Naive thymus-derived CD4-positive, alpha-beta T cell (primary cell): ENCODE measurements at regions of chr3 and their contacts with region 1.

Region 1: DNA sequence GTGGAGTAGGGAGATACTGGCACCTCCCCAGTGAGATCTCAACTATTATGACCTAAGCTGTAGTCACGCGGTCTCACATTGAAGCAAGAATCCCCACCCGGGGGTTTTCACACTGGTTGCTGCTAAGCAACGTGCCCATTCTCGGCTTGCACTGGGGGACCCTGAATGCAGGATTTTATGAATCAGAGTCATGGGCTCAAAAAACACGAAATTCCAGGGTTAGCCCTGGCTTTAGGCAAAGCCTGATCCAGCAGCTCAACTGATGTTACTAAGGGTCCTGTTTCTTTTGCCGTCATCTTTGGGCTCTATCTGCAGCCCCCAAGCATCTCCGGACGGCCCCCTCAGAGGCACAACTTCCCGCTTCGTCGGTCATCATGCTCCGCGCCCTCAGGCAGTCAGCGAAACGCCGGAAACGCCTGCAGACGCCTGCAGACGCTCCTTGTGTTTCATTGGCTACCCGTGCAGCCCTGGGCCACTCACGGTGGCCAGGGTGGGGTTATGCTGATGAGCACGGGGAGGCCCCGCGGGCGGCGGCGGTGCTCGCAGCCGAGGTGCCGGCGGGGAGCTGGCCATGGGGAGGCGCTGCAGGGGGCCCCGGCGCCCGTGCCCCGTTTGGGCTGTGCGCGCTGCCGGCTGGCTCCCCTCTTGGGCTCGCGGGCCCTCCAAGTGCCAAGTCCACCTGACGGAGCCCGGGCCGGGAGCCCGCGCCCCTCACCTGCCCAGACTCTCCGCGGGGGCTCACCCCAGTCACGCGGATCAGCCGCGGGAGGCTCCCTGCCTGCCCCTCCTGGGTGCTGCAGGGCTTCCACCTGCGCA is 25.8 kb downstream of the EFCC1 start:
- DNase-seq: peak; percentile 84 to 94 (median 93)
- ATAC-seq: peak; percentile 99
- H3K4me3 ChIP-seq: peak overlapping the region; percentile 67
- H3K4me3 Mint-ChIP-seq: peak overlapping the region; percentile 69 to 88 (median 86)
- H3K27ac ChIP-seq: peak overlapping the region; percentile 74
- H3K27ac Mint-ChIP-seq: peak overlapping the region; percentile 82 to 97 (median 93)
- H3K4me1 ChIP-seq: peaks cover 8 to 11% of the 10 kb centered on the region in 2 donors
- H3K4me1 Mint-ChIP-seq: peaks cover 13 to 31% (median 25%) of the 10 kb centered on the region in 7 donors
- H3K27me3 ChIP-seq: no peaks in the 10 kb centered on the region
- H3K27me3 Mint-ChIP-seq: peaks cover 0 to 3% (median 0%) of the 10 kb centered on the region in 5 donors

Region 2: DNA sequence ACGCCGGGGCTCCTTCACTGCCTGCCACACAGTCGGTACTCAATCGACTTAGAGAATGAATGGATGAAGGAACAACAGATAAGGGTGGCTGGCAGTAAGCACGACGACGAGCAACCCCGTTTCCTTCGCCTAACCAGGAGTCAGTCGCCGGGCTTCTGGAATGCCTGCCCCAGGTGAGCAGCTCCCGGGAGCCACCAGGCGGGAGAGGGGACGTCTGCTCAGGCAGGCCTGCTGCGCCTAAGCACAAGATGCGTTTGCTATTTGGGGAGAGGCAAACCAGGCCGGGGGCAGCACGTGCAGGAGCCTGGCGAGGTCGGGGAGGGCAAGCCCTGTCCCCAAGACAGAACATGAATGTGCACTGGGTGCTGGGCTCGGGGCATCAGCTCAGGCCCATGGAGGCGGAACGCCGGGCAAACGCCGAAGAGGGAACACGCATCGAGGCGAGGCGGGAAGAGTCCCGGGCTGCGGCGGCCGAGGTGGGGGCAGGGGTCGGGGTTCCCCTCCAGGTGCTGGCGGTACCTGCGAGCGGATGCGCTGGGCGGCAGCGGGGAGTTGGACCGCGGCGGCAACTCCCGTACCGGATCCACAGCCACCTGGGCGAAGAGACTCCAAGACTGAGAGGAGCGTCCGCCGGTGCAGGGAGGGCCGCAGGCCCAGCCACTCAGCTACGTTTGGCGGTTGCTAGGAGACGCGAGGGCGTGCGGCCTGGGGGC is 33.3 kb before region 1 on chr3 and contains the start of gene CFAP92:
- CTCF ChIA-PET with region 1: interaction called, 5 read pairs
- POLR2A ChIA-PET with region 1: interaction called, 41 read pairs
- intact Hi-C with region 1: loop called (anchors 1 kb)
- DNase-seq: peak; percentile 84 to 90 (median 89)
- ATAC-seq: peak; percentile 99
- H3K4me3 ChIP-seq: peak within 1 kb of the TSS; percentile 57
- H3K4me3 Mint-ChIP-seq: peak within 1 kb of the TSS; percentile 71 to 87 (median 82)
- H3K27ac ChIP-seq: peak within 1 kb of the TSS; percentile 61
- H3K27ac Mint-ChIP-seq: peak within 1 kb of the TSS; percentile 56 to 91 (median 73)
- H3K4me1 ChIP-seq: peaks cover 6 to 28% of the 10 kb centered on the region in 2 donors
- H3K4me1 Mint-ChIP-seq: peaks cover 15 to 45% (median 34%) of the 10 kb centered on the region in 7 donors
- H3K27me3 ChIP-seq: no peaks in the 10 kb centered on the region
- H3K27me3 Mint-ChIP-seq: peaks cover 0 to 3% (median 0%) of the 10 kb centered on the region in 5 donors
- total RNA-seq, gene CFAP92: 0.10 to 1.4 (median 0.46) TPM

Region 3: DNA sequence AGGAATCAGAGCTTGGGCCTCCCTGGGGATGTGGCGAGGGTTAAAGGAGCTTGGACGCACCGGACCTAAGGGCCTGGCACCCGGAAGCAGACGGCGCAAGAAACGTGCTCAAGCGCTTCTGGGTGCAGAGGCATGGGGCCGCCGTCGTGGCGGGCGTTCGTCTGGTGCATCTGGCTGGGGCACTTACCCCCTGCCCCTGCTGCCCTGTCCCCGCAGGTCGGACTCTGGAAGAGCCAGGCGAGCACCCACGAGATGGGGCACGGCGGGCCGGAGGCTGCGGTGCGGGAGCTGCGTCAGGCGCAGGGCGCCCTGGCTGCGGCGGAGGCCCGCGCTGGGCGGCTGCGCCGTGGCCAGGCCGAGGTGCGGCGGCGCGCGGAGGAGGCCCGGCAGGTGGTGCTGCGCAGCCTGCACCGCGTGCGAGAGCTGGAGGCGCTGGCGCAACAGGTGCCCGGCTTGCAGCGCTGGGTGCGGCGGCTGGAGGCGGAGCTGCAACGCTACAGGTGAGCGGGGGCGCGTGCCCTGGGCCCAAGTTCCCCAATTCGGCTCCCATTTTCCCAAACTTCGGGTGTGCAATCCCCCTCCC is 23.3 kb before region 1 on chr3:
- CTCF ChIA-PET with region 1: interaction called, 16 read pairs
- POLR2A ChIA-PET with region 1: interaction called, 41 read pairs
- intact Hi-C with region 1: loop called in 1 of 2 experiments (anchors 1 kb)
- DNase-seq: peak; percentile 46 to 70 (median 62)
- ATAC-seq: peak; percentile 94
- H3K4me3 ChIP-seq: no peak overlapping the region
- H3K4me3 Mint-ChIP-seq: peak overlapping the region; percentile 55 to 84 (median 72)
- H3K27ac ChIP-seq: no peak overlapping the region
- H3K27ac Mint-ChIP-seq: peak overlapping the region in 3 of 9 donors; percentile 19 to 72 (median 68)
- H3K4me1 ChIP-seq: peaks cover 5 to 33% of the 10 kb centered on the region in 2 donors
- H3K4me1 Mint-ChIP-seq: peaks cover 29 to 62% (median 52%) of the 10 kb centered on the region in 7 donors
- H3K27me3 ChIP-seq: peaks cover 5 to 8% of the 10 kb centered on the region in 2 donors
- H3K27me3 Mint-ChIP-seq: peaks cover 13 to 61% (median 24%) of the 10 kb centered on the region in 5 donors

Region 4: GRCh38 chr3:129160891-129161859 is 134.2 kb after region 1 on chr3 and contains the start of gene ISY1:
- CTCF ChIA-PET with region 1: interaction called, 7 read pairs
- POLR2A ChIA-PET with region 1: interaction called, 3 read pairs
- intact Hi-C with region 1: loop called (anchors 1 kb)
- DNase-seq: peak; percentile 68 to 92 (median 89)
- ATAC-seq: peak; percentile 90
- H3K4me3 ChIP-seq: peak within 1 kb of the TSS; percentile 94
- H3K4me3 Mint-ChIP-seq: peak within 1 kb of the TSS; percentile 84 to 100 (median 98)
- H3K27ac ChIP-seq: peak within 1 kb of the TSS; percentile 98
- H3K27ac Mint-ChIP-seq: peak within 1 kb of the TSS; percentile 97 to 100 (median 99)
- H3K4me1 ChIP-seq: peaks cover 22 to 24% of the 10 kb centered on the region in 2 donors
- H3K4me1 Mint-ChIP-seq: peaks cover 18 to 53% (median 40%) of the 10 kb centered on the region in 7 donors
- H3K27me3 ChIP-seq: no peaks in the 10 kb centered on the region
- H3K27me3 Mint-ChIP-seq: peaks cover 0 to 4% (median 0%) of the 10 kb centered on the region in 5 donors
- total RNA-seq, gene ISY1: 27.6 to 65.1 (median 37.4) TPM